Head of caudate nucleus (tissue), 42 donors: ENCODE measurements at regions of chr2 and their contacts with region 1.

Region 1: DNA sequence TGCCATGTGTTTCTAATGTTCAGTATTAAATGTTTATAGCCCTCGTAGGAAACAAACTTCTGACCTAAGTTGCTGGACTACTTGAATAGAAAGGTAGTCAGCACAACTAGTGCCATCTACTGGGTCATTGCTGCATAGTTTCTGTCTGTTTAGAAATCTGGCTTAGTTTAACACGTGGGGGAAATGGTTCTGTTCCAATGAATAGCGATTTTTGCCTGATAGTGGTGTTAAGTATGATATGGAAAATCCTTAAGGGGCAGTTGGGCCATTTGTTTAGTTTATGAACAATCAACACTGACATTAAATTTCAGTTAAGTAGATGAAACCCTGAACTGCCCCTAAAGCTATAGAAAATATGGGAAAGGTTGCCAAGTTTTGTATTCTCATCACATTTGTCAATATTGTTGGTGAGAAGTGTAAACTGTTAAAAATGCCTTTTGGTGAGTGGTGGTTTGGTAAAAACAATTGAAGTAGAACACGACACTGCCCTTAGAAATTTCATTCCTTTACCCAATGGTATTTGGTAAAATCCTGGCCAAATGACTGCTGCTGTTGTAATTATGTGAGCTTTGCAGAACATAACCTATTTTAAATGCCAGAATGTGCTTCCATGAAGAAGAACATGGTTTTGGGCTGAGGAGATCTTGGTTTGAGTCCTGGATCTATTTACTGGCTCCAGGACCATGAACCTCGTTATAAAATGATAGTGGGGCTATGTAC is 13.2 kb downstream of the NABP1 start:
- DNase-seq: peak in 20 of 42 donors; percentile 16 to 80 (median 48)

Region 2: GRCh38 chr2:190979906-190980629 is 711.1 kb before region 1 on chr2:
- intact Hi-C with region 1: no loop called
- DNase-seq: no peak

Region 3: GRCh38 chr2:191566344-191566743 is 124.8 kb before region 1 on chr2:
- intact Hi-C with region 1: loop called (anchors 5 kb)
- DNase-seq: peak in 41 of 42 donors; percentile 7 to 87 (median 65)

Region 4: GRCh38 chr2:191748059-191748461 is 56.9 kb after region 1 on chr2:
- intact Hi-C with region 1: no loop called
- DNase-seq: no peak